ENCODE measurements at regions of chr9 and their contacts with region 1.

Region 1: GRCh38 chr9:133184962-133185361 is 21.2 kb upstream of the GBGT1 start:
- DNase-seq: peak; percentile 67
- ATAC-seq: peak; percentile 80

Region 2: GRCh38 chr9:132135456-132135855 is 1049.5 kb before region 1 on chr9:
- intact Hi-C with region 1: no loop called
- DNase-seq: no peak
- ATAC-seq: no peak

Region 3: GRCh38 chr9:133335878-133336811 is 151.2 kb after region 1 on chr9 and contains the start of gene SURF6:
- intact Hi-C with region 1: loop called (anchors 10 kb)
- DNase-seq: peak; percentile 92
- ATAC-seq: peak; percentile 94
- total RNA-seq, gene SURF6: 17.3 TPM

Region 4: DNA sequence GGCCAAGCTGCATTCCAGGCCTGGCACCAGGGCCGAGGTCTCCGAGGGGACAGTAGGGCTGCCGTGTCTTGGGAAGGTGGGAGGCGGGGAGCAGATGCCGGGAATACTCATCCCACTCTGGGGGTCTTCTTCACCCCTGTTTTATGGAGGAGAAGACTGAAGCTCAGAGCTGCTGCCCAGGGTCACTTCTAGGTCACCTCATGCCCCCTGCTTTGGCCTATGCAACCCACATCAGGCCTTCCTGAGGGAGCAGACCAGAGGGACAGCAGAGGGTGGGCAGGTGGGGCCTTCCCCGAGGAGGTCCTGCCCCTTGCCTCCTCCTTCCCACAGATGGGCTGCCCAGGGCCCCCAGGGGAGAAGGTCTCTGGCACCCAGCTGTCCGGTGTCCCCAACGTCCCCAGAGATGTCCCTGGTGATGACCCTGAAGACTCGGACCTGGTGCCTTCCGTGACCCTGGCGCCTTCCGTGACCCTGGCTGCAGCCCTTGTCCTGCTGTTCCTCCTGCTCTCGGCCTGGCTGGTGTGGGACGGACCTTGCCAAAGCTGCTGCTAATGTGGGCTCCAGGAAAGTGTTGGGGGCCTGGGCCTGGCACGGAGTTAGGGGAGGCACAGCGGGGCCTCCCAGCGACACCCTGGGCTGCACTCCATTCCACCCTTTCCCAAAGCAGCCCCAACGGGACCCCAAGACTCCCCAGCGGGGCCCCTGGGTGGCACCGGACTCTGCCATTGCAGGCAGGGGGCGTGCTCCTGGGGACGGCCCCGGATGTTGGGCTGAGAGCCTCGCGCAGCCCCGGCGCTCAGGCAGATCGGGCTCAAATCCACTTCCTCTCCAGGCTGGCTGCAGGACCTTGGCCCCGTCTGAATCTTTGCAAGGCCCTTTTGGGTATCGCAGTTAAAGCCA is 300.6 kb after region 1 on chr9:
- intact Hi-C with region 1: loop called (anchors 10 kb)
- DNase-seq: no peak
- ATAC-seq: peak; percentile 3